ENCODE measurements at regions of chr20 and their contacts with region 1.

Region 1: DNA sequence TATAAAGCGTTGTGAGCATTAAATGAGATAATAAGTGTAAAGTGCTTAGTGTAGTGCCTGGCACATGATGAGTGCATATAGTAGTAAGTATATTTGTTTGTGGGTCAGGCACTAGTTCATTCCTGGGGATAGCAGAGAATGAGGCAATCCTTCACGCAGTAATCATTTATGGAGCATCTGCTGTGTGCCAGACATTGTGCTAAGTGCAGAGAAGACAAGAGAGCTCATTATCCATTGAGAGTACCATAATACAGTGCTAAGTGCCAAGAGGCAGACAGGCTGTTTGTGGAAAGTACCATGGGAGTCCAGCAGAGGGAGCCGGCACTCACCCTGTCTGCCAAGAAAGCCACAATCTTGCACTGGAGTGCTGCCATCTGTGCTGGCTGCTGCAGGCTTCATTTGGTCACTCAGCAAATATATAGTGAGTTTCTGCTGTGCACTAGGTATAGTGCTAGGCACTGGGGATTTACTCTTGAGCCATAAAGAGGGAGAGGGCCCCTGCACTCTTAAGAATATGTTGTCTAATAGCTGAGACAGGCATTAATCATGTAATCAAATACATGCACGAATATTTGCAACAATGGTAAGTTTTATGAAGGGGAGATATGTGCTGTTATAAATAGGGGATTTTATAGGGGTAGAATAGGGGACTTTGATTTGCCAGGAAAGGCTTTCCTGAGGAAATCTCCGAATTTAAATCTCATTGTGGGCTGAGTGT is 12.9 kb upstream of the MROH8 start:
- DNase-seq: peak; percentile 90
- ATAC-seq: peak; percentile 90
- H3K4me3 ChIP-seq: no peak overlapping the region
- H3K27ac ChIP-seq: no peak overlapping the region
- H3K4me1 ChIP-seq: peaks cover 5% of the 10 kb centered on the region
- H3K27me3 ChIP-seq: no peaks in the 10 kb centered on the region
- CTCF ChIP-seq: peak; percentile 90

Region 2: DNA sequence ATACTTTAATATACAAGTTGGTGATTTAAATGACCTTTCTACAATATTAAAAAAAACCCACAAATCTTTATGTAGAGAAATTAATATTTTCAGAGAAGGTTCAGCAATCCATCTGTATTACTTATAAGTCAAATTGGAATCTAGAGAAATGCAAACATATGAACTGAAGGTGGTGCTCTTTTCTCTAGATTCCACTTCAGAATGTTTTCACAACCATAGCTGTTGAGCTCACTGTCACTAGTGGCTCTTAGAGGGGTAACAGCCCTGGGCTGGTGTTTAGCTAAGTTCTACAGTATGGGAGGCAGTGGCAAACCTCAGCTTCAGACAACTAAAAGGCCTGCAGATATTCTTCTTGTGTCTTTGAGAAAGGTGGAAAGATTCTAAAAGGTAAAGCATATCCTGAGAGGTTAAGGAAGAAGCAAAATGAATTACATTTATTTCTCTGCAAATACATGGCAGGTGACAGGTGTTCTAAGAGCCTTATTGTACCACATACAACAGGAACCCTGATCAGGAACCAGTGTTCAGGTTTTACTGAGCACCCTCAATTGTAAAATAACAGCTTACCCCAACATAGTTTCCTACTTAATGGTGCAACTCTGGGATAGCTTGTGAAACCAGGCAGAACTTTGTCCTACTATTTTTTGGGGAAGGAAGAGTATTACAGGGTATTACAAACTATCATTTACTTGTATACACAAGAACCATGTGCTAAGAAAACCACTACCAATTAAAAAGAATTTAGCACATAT is 184.2 kb before region 1 on chr20:
- CTCF ChIA-PET with region 1: interaction called, 5 read pairs
- POLR2A ChIA-PET with region 1: no interaction called
- intact Hi-C with region 1: loop called (anchors 5 kb)
- DNase-seq: peak; percentile 22
- ATAC-seq: peak; percentile 81
- H3K4me3 ChIP-seq: no peak overlapping the region
- H3K27ac ChIP-seq: no peak overlapping the region
- H3K4me1 ChIP-seq: no peaks in the 10 kb centered on the region
- H3K27me3 ChIP-seq: no peaks in the 10 kb centered on the region
- CTCF ChIP-seq: 0 out of 2 replicates have a peak, but pooled peaks have one; percentile 35

Region 3: DNA sequence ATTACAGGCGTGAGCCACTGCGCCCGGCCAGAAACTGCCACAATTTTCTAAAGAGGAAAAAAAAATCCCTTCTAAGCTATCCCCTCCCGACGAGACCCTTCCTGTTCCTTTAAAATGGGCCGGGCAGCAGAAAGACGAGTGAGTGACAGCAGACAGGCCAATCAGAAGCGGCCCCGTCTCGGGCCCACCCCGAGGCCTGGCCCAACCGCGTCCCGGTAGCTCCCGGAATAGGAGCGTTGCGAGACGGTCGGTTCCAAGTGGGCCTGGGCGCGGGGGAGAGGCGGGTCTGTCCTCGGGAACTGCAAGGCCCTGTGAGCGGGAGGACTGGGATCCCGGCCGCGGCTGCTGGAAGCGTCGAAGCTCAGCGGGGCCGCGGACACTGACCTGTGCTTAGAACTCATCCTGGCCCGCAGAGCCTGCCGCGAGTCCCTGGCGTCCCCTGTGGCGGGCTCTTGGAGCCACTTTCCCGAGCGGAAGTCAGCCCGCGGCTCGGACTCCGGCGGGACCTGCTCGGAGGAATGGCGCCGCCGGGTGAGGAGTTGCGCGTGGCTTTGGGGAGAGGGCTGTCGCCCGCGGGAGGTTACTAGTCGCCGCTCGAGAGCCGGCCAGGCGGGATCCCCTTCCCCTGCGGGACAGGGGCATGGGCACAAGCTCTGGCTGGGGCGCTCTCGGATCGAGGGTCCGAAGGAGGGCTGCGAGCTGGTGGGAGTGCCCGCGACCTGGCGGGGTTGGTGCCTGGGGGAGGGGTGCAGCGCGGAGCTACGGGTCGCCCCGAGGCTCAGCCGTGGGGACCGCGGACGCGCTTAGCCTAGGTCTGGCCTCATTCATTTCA is 13.2 kb before region 1 on chr20 and contains the starts of genes MROH8 and RPN2:
- CTCF ChIA-PET with region 1: interaction called, 11 read pairs
- POLR2A ChIA-PET with region 1: interaction called, 7 read pairs
- intact Hi-C with region 1: no loop called
- DNase-seq: peak; percentile 96
- ATAC-seq: peak; percentile 93
- H3K4me3 ChIP-seq: peak within 1 kb of the TSS; percentile 96
- H3K27ac ChIP-seq: peak within 1 kb of the TSS; percentile 92
- H3K4me1 ChIP-seq: peaks cover 24% of the 10 kb centered on the region
- H3K27me3 ChIP-seq: no peaks in the 10 kb centered on the region
- CTCF ChIP-seq: no peak
- total RNA-seq, gene MROH8: 0.58 and 0.98 TPM in 2 replicates
- total RNA-seq, gene RPN2: 257 and 274 TPM in 2 replicates

Region 4: GRCh38 chr20:37333848-37334318 is 141.6 kb after region 1 on chr20:
- CTCF ChIA-PET with region 1: no interaction called
- POLR2A ChIA-PET with region 1: no interaction called
- intact Hi-C with region 1: no loop called
- DNase-seq: no peak
- ATAC-seq: no peak
- H3K4me3 ChIP-seq: no peak overlapping the region
- H3K27ac ChIP-seq: no peak overlapping the region
- H3K4me1 ChIP-seq: peaks cover 15% of the 10 kb centered on the region
- H3K27me3 ChIP-seq: no peaks in the 10 kb centered on the region
- CTCF ChIP-seq: no peak

Region 5: GRCh38 chr20:37345339-37346230 is 153.3 kb after region 1 on chr20 and contains the start of gene SRC:
- CTCF ChIA-PET with region 1: interaction called, 10 read pairs
- POLR2A ChIA-PET with region 1: interaction called, 15 read pairs
- intact Hi-C with region 1: no loop called
- DNase-seq: peak; percentile 73
- ATAC-seq: peak; percentile 56
- H3K4me3 ChIP-seq: peak within 1 kb of the TSS; percentile 70
- H3K27ac ChIP-seq: peak within 1 kb of the TSS; percentile 27; the same call in 1 of the 2 replicates
- H3K4me1 ChIP-seq: peaks cover 35% of the 10 kb centered on the region
- H3K27me3 ChIP-seq: no peaks in the 10 kb centered on the region
- CTCF ChIP-seq: no peak
- total RNA-seq, gene SRC: 55.6 and 82.1 TPM in 2 replicates

Region 6: GRCh38 chr20:38599410-38599938 is 1407.2 kb after region 1 on chr20:
- CTCF ChIA-PET with region 1: no interaction called
- POLR2A ChIA-PET with region 1: interaction called, 20 read pairs
- intact Hi-C with region 1: no loop called
- DNase-seq: peak; percentile 62
- ATAC-seq: peak; percentile 66
- H3K4me3 ChIP-seq: no peak overlapping the region
- H3K27ac ChIP-seq: no peak overlapping the region
- H3K4me1 ChIP-seq: peaks cover 15% of the 10 kb centered on the region
- H3K27me3 ChIP-seq: no peaks in the 10 kb centered on the region
- CTCF ChIP-seq: no peak

Measured in PC-3 (cell line).